Naive thymus-derived CD4-positive, alpha-beta T cell (primary cell): ENCODE measurements at regions of chr19 and their contacts with region 1.

Region 1: GRCh38 chr19:37655689-37656371 is 565 bp upstream of the ZFP30 start:
- DNase-seq: peak; percentile 74 to 90 (median 86)
- ATAC-seq: peak; percentile 86
- H3K4me3 ChIP-seq: peak overlapping the region; percentile 95
- H3K4me3 Mint-ChIP-seq: peak overlapping the region; percentile 82 to 99 (median 96)
- H3K27ac ChIP-seq: peak overlapping the region; percentile 89
- H3K27ac Mint-ChIP-seq: peak overlapping the region; percentile 81 to 99 (median 97)
- H3K4me1 ChIP-seq: peaks cover 8 to 16% of the 10 kb centered on the region in 2 donors
- H3K4me1 Mint-ChIP-seq: peaks cover 28 to 40% (median 33%) of the 10 kb centered on the region in 7 donors
- H3K27me3 ChIP-seq: no peaks in the 10 kb centered on the region
- H3K27me3 Mint-ChIP-seq: peaks cover 0 to 3% (median 0%) of the 10 kb centered on the region in 5 donors

Region 2: DNA sequence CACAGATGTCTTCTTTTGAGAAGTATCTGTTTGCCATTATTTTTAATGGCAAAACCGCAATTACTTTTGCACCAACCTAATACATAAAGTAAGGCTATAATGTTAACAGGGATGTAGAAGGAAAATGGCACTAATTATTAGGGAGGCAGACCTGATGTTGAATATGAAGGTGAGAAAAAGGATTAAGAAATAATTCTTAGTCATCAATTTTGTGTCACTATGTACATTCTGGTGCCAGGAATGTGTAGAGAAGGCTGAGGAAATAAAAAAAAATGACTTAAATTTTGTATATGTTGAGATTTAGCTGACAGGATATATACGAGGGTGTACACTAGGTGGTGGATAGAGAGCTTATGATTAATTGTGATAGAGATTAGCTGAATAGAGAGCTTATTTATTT is 458.1 kb before region 1 on chr19:
- CTCF ChIA-PET with region 1: no interaction called
- POLR2A ChIA-PET with region 1: no interaction called
- intact Hi-C with region 1: no loop called
- DNase-seq: no peak
- ATAC-seq: no peak
- H3K4me3 ChIP-seq: no peak overlapping the region
- H3K4me3 Mint-ChIP-seq: no peak overlapping the region
- H3K27ac ChIP-seq: no peak overlapping the region
- H3K27ac Mint-ChIP-seq: no peak overlapping the region
- H3K4me1 ChIP-seq: no peaks in the 10 kb centered on the region
- H3K4me1 Mint-ChIP-seq: peaks cover 0 to 2% (median 0%) of the 10 kb centered on the region in 7 donors
- H3K27me3 ChIP-seq: no peaks in the 10 kb centered on the region
- H3K27me3 Mint-ChIP-seq: no peaks in the 10 kb centered on the region

Region 3: DNA sequence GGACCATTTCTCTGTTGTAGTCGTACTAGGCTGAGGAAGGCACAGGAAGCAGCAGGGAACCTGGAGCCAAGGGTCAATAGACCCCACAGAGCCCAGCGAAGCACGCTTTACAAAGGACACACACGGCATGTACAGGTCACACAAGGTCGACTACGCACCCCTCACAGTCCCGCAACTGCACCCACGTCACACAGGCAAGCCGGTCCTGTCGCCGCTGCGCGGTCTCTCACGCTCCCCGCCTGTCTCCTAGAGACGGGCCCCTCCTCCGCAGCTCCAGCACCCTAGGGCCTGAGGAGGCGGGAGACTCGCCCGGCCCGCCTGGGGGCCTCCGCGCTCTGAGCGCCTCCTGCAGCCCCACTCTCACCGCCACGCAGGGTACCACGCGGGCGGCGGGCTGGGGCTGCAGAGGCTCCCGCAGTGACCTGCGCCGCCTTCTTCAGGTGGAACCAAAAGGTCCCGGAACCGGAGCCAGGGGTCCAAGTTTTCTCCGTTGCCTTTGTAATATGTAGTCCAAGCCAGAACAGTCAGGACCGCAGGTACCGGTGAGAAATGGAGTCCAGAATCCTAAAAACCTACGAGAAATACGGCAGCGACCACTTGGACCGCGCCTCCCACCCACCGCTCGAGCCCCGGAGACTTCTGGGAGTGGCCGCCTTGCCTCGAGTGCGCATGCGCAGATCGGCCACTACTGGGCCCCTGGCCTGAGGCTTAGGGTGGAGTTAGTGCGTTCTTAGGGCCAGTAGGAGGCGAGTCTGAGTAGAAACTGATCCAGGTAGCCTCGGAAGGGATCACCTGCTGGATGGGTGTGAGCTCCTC is 63.5 kb after region 1 on chr19 and contains the start of gene ZNF607:
- CTCF ChIA-PET with region 1: no interaction called
- POLR2A ChIA-PET with region 1: no interaction called
- intact Hi-C with region 1: loop called (anchors 1 kb)
- DNase-seq: peak; percentile 43 to 80 (median 70)
- ATAC-seq: peak; percentile 87
- H3K4me3 ChIP-seq: peak within 1 kb of the TSS; percentile 63
- H3K4me3 Mint-ChIP-seq: peak within 1 kb of the TSS; percentile 80 to 95 (median 91)
- H3K27ac ChIP-seq: peak within 1 kb of the TSS; percentile 77
- H3K27ac Mint-ChIP-seq: peak within 1 kb of the TSS; percentile 80 to 98 (median 86)
- H3K4me1 ChIP-seq: peaks cover 6 to 7% of the 10 kb centered on the region in 2 donors
- H3K4me1 Mint-ChIP-seq: peaks cover 7 to 17% (median 10%) of the 10 kb centered on the region in 7 donors
- H3K27me3 ChIP-seq: no peaks in the 10 kb centered on the region
- H3K27me3 Mint-ChIP-seq: peaks cover 0 to 5% (median 0%) of the 10 kb centered on the region in 5 donors
- total RNA-seq, gene ZNF607: 3.5 to 10.8 (median 6.5) TPM